ENCODE measurements at regions of chr16 and their contacts with region 1.

Region 1: DNA sequence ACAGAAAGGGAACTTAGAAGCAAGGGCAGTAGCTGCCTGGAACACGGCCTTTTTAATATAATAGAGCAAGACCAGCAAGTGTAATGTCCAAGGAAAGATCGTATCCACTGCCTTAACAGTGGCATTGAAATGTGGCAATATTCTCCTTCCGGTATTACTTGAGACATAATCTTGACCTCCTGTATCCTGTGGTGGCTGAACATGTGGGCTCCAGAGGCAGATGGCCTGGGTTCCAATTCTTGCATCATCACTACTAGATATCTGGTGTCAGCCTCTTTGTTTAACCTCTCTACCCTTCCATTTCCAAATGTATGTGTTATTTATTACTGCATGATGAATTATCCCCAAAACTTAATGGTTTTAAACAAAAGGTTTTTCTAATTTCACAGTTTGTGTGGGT is 3.5 kb upstream of the CDYL2 start:
- DNase-seq: peak in 1 of 3 donors; percentile 25
- H3K4me3 ChIP-seq: no peak overlapping the region
- H3K27ac ChIP-seq: peak overlapping the region; percentile 21 to 47
- H3K4me1 ChIP-seq: peaks cover 6 to 30% (median 22%) of the 10 kb centered on the region in 4 experiments
- H3K27me3 ChIP-seq: no peaks in the 10 kb centered on the region

Region 2: GRCh38 chr16:80691111-80691741 is 116.7 kb before region 1 on chr16:
- CTCF ChIA-PET with region 1: no interaction called
- POLR2A ChIA-PET with region 1: no interaction called
- DNase-seq: no peak
- H3K4me3 ChIP-seq: no peak overlapping the region
- H3K27ac ChIP-seq: no peak overlapping the region
- H3K4me1 ChIP-seq: no peaks in the 10 kb centered on the region
- H3K27me3 ChIP-seq: no peaks in the 10 kb centered on the region

Region 3: DNA sequence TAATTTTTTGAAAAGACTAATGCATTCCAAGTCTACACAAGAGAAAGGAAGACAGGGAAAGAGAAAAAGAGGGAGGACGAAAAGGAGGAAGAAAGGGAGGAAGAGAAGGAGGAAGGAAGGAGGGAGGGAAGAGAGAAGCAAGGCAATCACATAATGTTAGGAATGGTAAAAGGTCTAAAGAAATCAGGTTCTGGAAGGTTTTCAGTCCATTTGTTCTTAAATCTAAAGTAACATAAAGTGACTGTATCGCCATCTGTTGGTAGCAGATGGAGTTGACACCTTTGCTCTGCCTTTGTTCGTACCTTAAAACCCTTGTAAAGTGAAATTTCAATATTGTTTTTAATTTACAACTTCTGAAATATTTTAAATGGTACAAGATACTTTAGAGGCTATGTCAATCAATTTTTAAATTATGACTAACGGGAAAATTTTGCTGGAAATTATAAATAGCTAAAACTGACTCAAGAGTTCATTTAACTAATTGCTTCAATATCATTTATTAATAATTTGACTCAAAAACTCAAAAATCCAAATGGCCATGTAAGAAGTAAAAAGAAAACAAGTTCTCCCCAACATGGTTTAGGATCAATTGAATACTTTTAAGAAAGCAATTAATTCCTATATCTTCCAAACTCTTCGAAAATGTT is 16.9 kb after region 1 on chr16:
- CTCF ChIA-PET with region 1: interaction called, 14 read pairs
- POLR2A ChIA-PET with region 1: no interaction called
- DNase-seq: peak; percentile 66 to 86 (median 82)
- H3K4me3 ChIP-seq: no peak overlapping the region
- H3K27ac ChIP-seq: no peak overlapping the region
- H3K4me1 ChIP-seq: peaks cover 0 to 3% (median 0%) of the 10 kb centered on the region in 4 experiments
- H3K27me3 ChIP-seq: no peaks in the 10 kb centered on the region

Measured in common myeloid progenitor, CD34-positive (primary cell).